ENCODE measurements at regions of chr1 and their contacts with region 1.

Region 1: DNA sequence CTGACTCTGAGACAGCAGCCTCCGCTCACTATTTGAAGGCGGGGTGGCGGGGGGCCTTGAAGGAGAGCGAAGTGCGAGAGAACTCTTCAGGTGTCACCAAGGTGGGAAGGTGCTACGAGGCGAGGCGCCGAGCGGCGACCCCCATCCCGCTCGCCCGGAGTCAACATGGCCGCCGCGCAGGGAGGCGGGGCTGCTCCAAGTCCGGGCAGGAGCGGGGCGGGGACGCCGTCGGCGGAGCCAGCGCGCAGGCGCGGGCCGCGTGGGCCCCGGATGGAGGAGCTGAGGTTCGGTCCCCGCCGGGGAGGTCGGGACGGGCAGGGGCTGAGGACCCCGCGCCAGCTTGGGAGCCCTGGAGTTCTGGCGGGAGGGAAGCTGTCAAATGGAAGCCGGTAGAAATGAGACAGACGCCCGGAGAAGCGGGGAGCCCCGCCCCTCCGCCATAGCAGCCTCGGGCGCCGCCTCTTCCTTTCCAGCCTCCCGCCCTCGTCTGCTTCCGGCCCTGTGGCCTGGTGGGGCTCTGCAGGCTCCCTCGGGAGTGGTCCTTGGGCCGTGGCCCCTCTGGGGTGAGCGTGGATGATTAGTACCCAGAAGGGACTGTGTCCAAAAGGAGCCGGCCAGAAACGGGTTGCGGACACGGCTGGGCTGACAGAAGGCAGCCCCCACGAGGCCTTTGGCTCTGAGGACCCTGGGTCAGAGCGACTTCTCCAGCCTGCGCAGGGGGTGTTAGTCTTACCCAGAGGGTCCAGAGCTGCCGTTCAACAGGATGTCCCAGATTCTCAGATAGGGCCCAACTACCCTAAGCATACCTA is at the start of gene PIGV:
- DNase-seq: peak; percentile 76 to 94 (median 86)
- ATAC-seq: peak; percentile 69
- H3K4me3 ChIP-seq: peak within 1 kb of the TSS; percentile 84
- H3K4me3 Mint-ChIP-seq: peak within 1 kb of the TSS; percentile 98
- H3K27ac ChIP-seq: peak within 1 kb of the TSS; percentile 95 to 97
- H3K27ac Mint-ChIP-seq: peak within 1 kb of the TSS; percentile 96
- H3K4me1 ChIP-seq: peaks cover 70% of the 10 kb centered on the region
- H3K4me1 Mint-ChIP-seq: peaks cover 71% of the 10 kb centered on the region
- H3K27me3 ChIP-seq: no peaks in the 10 kb centered on the region
- H3K27me3 Mint-ChIP-seq: no peaks in the 10 kb centered on the region
- CTCF ChIP-seq: no peak
- total RNA-seq, gene PIGV: 3.8 to 4.7 TPM

Region 2: GRCh38 chr1:26500488-26501175 is 287.3 kb before region 1 on chr1:
- CTCF ChIA-PET with region 1: interaction called, 7 read pairs
- POLR2A ChIA-PET with region 1: interaction called, 27 read pairs
- intact Hi-C with region 1: loop called (anchors 1 to 5 kb)
- DNase-seq: peak; percentile 77 to 94 (median 88)
- ATAC-seq: peak; percentile 71
- H3K4me3 ChIP-seq: peak overlapping the region; percentile 76
- H3K4me3 Mint-ChIP-seq: peak overlapping the region; percentile 81
- H3K27ac ChIP-seq: peak overlapping the region; percentile 91 to 94
- H3K27ac Mint-ChIP-seq: peak overlapping the region; percentile 73
- H3K4me1 ChIP-seq: peaks cover 27% of the 10 kb centered on the region
- H3K4me1 Mint-ChIP-seq: peaks cover 14% of the 10 kb centered on the region
- H3K27me3 ChIP-seq: no peaks in the 10 kb centered on the region
- H3K27me3 Mint-ChIP-seq: no peaks in the 10 kb centered on the region
- CTCF ChIP-seq: peak; percentile 54

Region 3: GRCh38 chr1:26677306-26678115 is 110.4 kb before region 1 on chr1:
- CTCF ChIA-PET with region 1: interaction called, 22 read pairs
- POLR2A ChIA-PET with region 1: interaction called, 10 read pairs
- intact Hi-C with region 1: loop called (anchors 1 kb)
- DNase-seq: peak in 13 of 14 experiments; percentile 28 to 87 (median 50)
- ATAC-seq: peak; percentile 94
- H3K4me3 ChIP-seq: no peak overlapping the region
- H3K4me3 Mint-ChIP-seq: peak overlapping the region; percentile 42
- H3K27ac ChIP-seq: no peak overlapping the region
- H3K27ac Mint-ChIP-seq: no peak overlapping the region
- H3K4me1 ChIP-seq: peaks cover 13% of the 10 kb centered on the region
- H3K4me1 Mint-ChIP-seq: peaks cover 19% of the 10 kb centered on the region
- H3K27me3 ChIP-seq: no peaks in the 10 kb centered on the region
- H3K27me3 Mint-ChIP-seq: no peaks in the 10 kb centered on the region
- CTCF ChIP-seq: peak; percentile 53

Region 4: DNA sequence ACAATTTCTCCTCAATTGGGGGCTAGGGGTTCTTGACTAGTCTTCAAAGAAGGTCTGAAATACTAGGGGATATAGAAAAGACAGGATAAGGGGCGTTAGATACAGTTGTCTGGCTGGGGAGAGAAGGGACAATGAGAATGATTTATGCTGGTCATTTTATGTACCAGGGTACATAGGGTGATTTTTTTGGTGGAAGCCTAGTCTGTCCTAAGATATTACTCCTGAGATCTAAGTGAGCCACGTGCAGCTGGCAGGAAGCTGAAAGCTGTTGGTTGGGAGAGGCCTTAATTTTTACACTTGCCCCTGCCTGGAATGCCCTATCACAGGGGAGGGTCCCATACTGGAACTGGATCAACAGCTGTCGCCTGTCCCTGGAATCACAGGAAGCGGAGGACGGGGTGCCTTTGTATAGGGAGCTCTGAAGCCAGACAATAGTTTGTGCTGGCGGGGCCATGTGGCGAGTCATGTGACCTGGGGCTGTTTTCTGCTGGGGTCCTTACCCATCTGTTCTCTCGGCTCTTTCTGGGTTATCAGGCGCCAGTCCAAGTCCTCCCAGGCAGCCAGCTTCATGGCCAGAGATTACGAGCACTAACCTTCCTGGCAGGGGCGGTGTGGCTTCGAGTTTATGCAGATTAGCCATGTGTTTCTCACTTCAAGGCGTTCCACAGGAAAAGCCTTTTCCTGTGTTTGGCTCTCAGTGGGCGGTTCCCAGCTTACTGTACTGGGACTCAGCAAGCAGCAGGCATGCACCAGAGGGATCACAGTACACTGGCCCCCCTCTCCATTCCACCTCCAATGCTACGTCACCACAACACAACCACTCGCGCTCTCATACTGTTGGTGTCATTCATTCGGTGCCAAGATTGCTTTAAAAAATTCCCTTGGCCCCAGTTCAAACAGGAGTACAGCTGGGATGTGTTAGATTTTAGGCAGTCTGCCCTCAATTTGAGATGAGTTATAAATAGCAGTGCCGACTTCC is 64.6 kb before region 1 on chr1:
- CTCF ChIA-PET with region 1: interaction called, 6 read pairs
- POLR2A ChIA-PET with region 1: interaction called, 18 read pairs
- intact Hi-C with region 1: loop called in 1 of 2 experiments (anchors 10 kb)
- DNase-seq: peak; percentile 6 to 81 (median 37)
- ATAC-seq: peak; percentile 77
- H3K4me3 ChIP-seq: peak overlapping the region; percentile 23
- H3K4me3 Mint-ChIP-seq: peak overlapping the region; percentile 83
- H3K27ac ChIP-seq: peak overlapping the region; percentile 25 to 62
- H3K27ac Mint-ChIP-seq: peak overlapping the region; percentile 85
- H3K4me1 ChIP-seq: peaks cover 75% of the 10 kb centered on the region
- H3K4me1 Mint-ChIP-seq: peaks cover 91% of the 10 kb centered on the region
- H3K27me3 ChIP-seq: no peaks in the 10 kb centered on the region
- H3K27me3 Mint-ChIP-seq: no peaks in the 10 kb centered on the region
- CTCF ChIP-seq: no peak

Region 5: DNA sequence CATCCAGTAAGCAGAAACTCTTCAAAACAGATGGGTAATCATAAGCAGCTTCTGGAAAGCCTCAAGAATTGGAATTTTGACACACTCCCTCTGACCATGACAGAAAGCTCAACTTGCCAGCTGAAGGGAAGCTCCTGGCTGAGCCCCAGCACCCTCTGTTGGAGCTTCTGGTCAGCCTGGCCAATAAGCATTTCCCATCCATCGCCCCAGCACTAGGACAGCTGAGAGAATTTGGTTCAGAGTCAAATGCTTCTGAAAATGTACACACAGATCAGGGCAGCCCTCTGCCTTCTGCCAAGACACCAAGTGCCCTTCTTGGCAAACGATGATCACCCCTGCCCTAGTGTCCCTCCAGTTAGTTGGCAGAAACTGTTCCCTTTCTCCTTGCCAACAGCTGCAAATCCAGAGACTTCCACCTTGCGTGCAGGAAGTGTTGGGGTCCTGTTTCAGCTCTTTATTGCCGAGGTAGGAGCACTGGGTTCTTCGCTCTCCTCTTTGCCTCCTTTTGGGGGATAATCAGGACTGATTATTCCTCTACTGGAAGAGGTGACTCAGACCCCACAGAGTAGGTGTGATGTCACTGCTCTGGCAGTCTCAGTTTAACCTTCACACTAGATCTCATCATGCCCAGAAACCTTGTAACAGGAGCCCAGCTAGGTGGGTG is 11.7 kb after region 1 on chr1:
- CTCF ChIA-PET with region 1: interaction called, 32 read pairs
- POLR2A ChIA-PET with region 1: interaction called, 12 read pairs
- intact Hi-C with region 1: no loop called
- DNase-seq: peak in 1 of 14 experiments; percentile 43
- ATAC-seq: peak; percentile 49
- H3K4me3 ChIP-seq: no peak overlapping the region
- H3K4me3 Mint-ChIP-seq: no peak overlapping the region
- H3K27ac ChIP-seq: peak overlapping the region; percentile 61 to 67
- H3K27ac Mint-ChIP-seq: peak overlapping the region; percentile 92
- H3K4me1 ChIP-seq: peaks cover 35% of the 10 kb centered on the region
- H3K4me1 Mint-ChIP-seq: peaks cover 30% of the 10 kb centered on the region
- H3K27me3 ChIP-seq: no peaks in the 10 kb centered on the region
- H3K27me3 Mint-ChIP-seq: no peaks in the 10 kb centered on the region
- CTCF ChIP-seq: no peak

Region 6: GRCh38 chr1:26864610-26865527 is 77.0 kb after region 1 on chr1:
- CTCF ChIA-PET with region 1: interaction called, 3 read pairs
- POLR2A ChIA-PET with region 1: interaction called, 17 read pairs
- intact Hi-C with region 1: no loop called
- DNase-seq: peak; percentile 85 to 97 (median 92)
- ATAC-seq: peak; percentile 94
- H3K4me3 ChIP-seq: peak overlapping the region; percentile 99
- H3K4me3 Mint-ChIP-seq: peak overlapping the region; percentile 94
- H3K27ac ChIP-seq: peak overlapping the region; percentile 71 to 76
- H3K27ac Mint-ChIP-seq: peak overlapping the region; percentile 66
- H3K4me1 ChIP-seq: peaks cover 43% of the 10 kb centered on the region
- H3K4me1 Mint-ChIP-seq: peaks cover 34% of the 10 kb centered on the region
- H3K27me3 ChIP-seq: no peaks in the 10 kb centered on the region
- H3K27me3 Mint-ChIP-seq: no peaks in the 10 kb centered on the region
- CTCF ChIP-seq: no peak

Region 7: GRCh38 chr1:27430903-27431600 is 643.1 kb after region 1 on chr1:
- CTCF ChIA-PET with region 1: no interaction called
- POLR2A ChIA-PET with region 1: no interaction called
- intact Hi-C with region 1: no loop called
- DNase-seq: peak in 9 of 14 experiments; percentile 7 to 83 (median 19)
- ATAC-seq: peak; percentile 87
- H3K4me3 ChIP-seq: peak overlapping the region; percentile 16
- H3K4me3 Mint-ChIP-seq: peak overlapping the region; percentile 74
- H3K27ac ChIP-seq: peak overlapping the region; percentile 46 to 56
- H3K27ac Mint-ChIP-seq: peak overlapping the region; percentile 86
- H3K4me1 ChIP-seq: peaks cover 90% of the 10 kb centered on the region
- H3K4me1 Mint-ChIP-seq: peaks cover 87% of the 10 kb centered on the region
- H3K27me3 ChIP-seq: no peaks in the 10 kb centered on the region
- H3K27me3 Mint-ChIP-seq: no peaks in the 10 kb centered on the region
- CTCF ChIP-seq: peak; percentile 4